Activated CD4-positive, alpha-beta memory T cell treated with anti-CD3 and anti-CD28 coated beads for 36 hours (primary cell): ENCODE measurements at regions of chr2 and their contacts with region 1.

Region 1: DNA sequence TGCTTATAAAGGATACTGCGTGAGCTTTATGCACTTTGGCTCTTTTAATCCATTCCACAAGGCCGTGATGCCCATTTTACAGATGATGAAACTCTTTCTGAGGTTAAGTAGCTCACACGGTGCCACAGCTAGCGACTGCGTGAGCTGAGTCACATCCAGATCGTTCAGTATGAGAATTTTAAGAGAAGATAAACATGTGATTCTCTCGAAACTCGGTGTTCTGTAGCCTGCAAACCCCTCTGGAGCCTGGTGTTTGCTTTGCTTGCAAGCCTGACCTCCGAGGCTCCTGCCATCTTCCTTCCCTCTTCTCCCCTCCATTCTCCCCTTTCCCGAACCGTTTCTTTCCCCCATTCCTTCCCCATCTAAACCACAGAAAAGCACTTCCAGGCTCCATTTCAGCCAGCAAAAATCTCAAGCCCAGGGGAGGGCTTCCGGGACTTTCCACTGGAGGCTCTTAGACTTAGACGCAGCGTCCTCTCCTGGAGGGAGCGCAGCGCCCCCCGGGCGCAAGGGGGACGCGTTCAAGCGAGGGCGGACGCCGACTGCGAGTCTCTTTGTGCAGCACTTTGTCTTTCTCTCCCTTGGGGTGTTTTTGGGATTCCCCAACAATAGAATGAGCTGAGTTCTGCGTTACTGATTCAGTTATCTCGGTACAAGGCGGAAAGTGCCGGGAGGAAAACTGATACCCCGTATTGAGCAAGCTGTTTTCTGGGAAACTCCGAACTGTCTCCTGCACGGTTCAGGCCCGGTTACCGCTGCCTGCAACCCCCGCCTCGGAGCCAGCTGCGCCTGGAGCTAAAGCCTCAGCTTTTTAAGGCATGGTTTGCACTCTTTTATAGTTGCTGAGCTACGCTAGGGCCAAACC is 38.0 kb downstream of the CYP1B1 start:
- DNase-seq: peak; percentile 70
- H3K4me3 Mint-ChIP-seq: peak overlapping the region; percentile 59
- H3K27ac Mint-ChIP-seq: peak overlapping the region; percentile 80
- H3K4me1 Mint-ChIP-seq: peaks cover 29% of the 10 kb centered on the region
- H3K27me3 Mint-ChIP-seq: peaks cover 49% of the 10 kb centered on the region

Region 2: GRCh38 chr2:38106405-38107094 is 68.6 kb after region 1 on chr2:
- CTCF ChIA-PET with region 1: interaction called, 3 read pairs
- POLR2A ChIA-PET with region 1: no interaction called
- intact Hi-C with region 1: loop called (anchors 2 kb)
- DNase-seq: no peak
- H3K4me3 Mint-ChIP-seq: no peak overlapping the region
- H3K27ac Mint-ChIP-seq: peak overlapping the region; percentile 34
- H3K4me1 Mint-ChIP-seq: peaks cover 12% of the 10 kb centered on the region
- H3K27me3 Mint-ChIP-seq: peaks cover 39% of the 10 kb centered on the region